MCF 10A (cell line): ENCODE measurements at regions of chr10 and their contacts with region 1.

Region 1: GRCh38 chr10:49538381-49539319 is at the start of gene ERCC6:
- DNase-seq: peak; percentile 97
- H3K4me3 Mint-ChIP-seq: peak within 1 kb of the TSS; percentile 88
- H3K27ac Mint-ChIP-seq: peak within 1 kb of the TSS; percentile 98
- H3K4me1 Mint-ChIP-seq: peaks cover 38% of the 10 kb centered on the region
- H3K27me3 Mint-ChIP-seq: no peaks in the 10 kb centered on the region
- CTCF ChIP-seq: no peak
- total RNA-seq, gene ERCC6: 54.0 and 64.4 TPM in 2 replicates

Region 2: GRCh38 chr10:49552249-49552672 is 13.6 kb after region 1 on chr10:
- CTCF ChIA-PET with region 1: interaction called, 32 read pairs
- POLR2A ChIA-PET with region 1: interaction called, 125 read pairs
- intact Hi-C with region 1: loop called (anchors 2 kb)
- DNase-seq: peak; percentile 72
- H3K4me3 Mint-ChIP-seq: peak overlapping the region; percentile 13
- H3K27ac Mint-ChIP-seq: peak overlapping the region; percentile 82
- H3K4me1 Mint-ChIP-seq: peaks cover 46% of the 10 kb centered on the region
- H3K27me3 Mint-ChIP-seq: no peaks in the 10 kb centered on the region
- CTCF ChIP-seq: no peak

Region 3: GRCh38 chr10:49568235-49568634 is 29.6 kb after region 1 on chr10:
- CTCF ChIA-PET with region 1: interaction called, 4 read pairs
- POLR2A ChIA-PET with region 1: interaction called, 68 read pairs
- intact Hi-C with region 1: no loop called
- DNase-seq: peak; percentile 29
- H3K4me3 Mint-ChIP-seq: peak overlapping the region; percentile 65
- H3K27ac Mint-ChIP-seq: peak overlapping the region; percentile 88
- H3K4me1 Mint-ChIP-seq: peaks cover 56% of the 10 kb centered on the region
- H3K27me3 Mint-ChIP-seq: no peaks in the 10 kb centered on the region
- CTCF ChIP-seq: no peak

Region 4: DNA sequence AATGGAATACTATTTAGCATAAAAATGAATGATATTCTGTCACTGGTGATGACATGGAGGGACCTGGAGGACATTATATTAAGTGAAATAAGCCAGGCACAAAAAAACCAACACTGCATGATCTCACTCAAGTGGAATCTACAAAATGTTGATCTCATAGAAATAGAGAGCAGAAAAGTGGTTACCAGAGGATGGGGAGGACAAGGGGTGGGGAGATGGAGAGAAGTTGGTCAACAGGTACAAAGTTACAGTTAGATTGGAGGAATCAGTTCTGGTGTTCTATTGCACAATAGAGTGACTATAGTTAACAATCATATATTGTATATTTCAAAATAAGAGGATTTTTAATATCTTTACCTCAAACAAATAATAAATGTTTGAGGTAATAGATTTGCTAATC is 46.7 kb after region 1 on chr10:
- CTCF ChIA-PET with region 1: interaction called, 3 read pairs
- POLR2A ChIA-PET with region 1: interaction called, 11 read pairs
- intact Hi-C with region 1: loop called (anchors 2 kb)
- DNase-seq: no peak
- H3K4me3 Mint-ChIP-seq: no peak overlapping the region
- H3K27ac Mint-ChIP-seq: peak overlapping the region; percentile 46
- H3K4me1 Mint-ChIP-seq: peaks cover 22% of the 10 kb centered on the region
- H3K27me3 Mint-ChIP-seq: no peaks in the 10 kb centered on the region
- CTCF ChIP-seq: no peak